Esophagus muscularis mucosa (tissue), 4 donors: ENCODE measurements at regions of chr19 and their contacts with region 1.

Region 1: DNA sequence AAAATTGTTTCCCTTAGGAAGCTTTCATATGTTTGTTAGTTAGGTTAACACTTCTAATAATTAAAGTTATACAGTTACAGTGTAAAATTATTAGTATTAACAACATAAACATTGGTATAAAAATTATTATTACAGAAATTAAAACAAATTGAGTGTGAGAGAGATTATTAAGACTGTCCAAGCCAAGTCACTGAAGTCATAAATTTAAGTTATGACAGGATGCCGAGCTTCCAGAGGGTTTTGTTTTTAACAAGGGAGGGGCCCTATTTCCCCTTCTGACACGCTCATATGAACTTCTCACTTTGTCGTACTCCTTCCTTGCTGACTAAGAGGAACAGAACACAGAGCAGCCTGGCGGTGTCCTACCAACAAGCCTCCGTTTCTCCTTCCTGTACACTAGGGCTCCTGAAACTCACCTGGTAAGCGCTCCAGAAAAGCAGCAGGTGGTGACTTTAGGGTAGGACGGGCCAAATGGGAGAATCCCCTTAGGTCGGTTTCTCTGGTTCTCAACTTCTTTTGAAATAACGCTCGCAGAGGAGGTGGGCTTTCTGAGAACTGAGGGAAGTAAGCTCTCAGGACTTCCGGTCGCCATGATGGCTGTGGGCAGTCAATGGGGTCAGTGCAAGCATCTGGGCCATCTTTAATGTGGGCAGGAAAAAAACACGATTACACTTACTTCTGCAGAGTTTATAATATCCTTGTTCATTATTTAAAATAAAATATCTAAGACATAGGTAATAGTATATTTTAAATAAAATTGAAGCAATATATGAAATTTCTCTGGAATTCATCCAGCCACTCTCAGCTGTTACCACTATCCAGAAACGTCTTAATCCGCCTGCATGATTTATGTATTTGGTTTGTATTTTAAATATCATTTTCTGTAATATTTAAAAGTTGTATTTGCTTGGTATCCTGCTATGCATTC is at the start of gene CARD8:
- DNase-seq: peak; percentile 94
- H3K4me3 ChIP-seq: peak within 1 kb of the TSS; percentile 64 to 77 (median 67)
- H3K27ac ChIP-seq: peak within 1 kb of the TSS; percentile 88 to 92 (median 90)
- H3K4me1 ChIP-seq: peaks cover 20 to 41% (median 24%) of the 10 kb centered on the region in 4 donors
- H3K27me3 ChIP-seq: no peaks in the 10 kb centered on the region
- CTCF ChIP-seq: peak in 1 of 3 experiments; percentile 13
- EP300 ChIP-seq: no peak
- POLR2A ChIP-seq: no peak
- total RNA-seq, gene CARD8: 17.7 to 22.3 (median 20.9) TPM

Region 2: DNA sequence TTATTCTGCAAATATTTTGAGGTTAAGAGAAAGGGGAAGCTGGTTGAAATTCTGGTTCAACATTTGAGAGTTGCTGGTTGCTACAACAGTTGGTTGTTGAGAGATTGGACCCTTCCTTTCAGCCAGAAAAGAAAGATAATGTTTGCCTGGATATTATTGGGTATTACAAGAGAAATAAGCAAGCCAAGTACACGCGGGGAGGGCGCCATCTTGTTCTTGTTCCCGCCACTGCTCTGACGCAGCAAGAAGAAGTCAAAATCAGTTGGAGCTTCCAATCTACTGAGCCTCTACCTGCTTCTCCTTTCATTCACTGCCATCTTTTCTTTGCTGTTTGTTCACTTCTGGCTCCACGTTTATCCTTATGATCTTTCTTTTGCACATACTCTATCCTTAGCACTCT is 282.1 kb before region 1 on chr19:
- intact Hi-C with region 1: loop called (anchors 10 kb)
- DNase-seq: peak; percentile 37
- H3K4me3 ChIP-seq: no peak overlapping the region
- H3K27ac ChIP-seq: no peak overlapping the region
- H3K4me1 ChIP-seq: no peaks in the 10 kb centered on the region
- H3K27me3 ChIP-seq: peaks cover 0 to 45% (median 0%) of the 10 kb centered on the region in 4 donors
- CTCF ChIP-seq: no peak
- EP300 ChIP-seq: no peak
- POLR2A ChIP-seq: no peak

Region 3: GRCh38 chr19:48110350-48110966 is 145.2 kb before region 1 on chr19 and contains the start of gene PLA2G4C:
- intact Hi-C with region 1: loop called (anchors 5 kb)
- DNase-seq: peak; percentile 94
- H3K4me3 ChIP-seq: peak within 1 kb of the TSS; percentile 45 to 61 (median 54)
- H3K27ac ChIP-seq: peak within 1 kb of the TSS; percentile 85 to 94 (median 86)
- H3K4me1 ChIP-seq: peaks cover 20 to 34% (median 33%) of the 10 kb centered on the region in 4 donors
- H3K27me3 ChIP-seq: no peaks in the 10 kb centered on the region
- CTCF ChIP-seq: peak in 1 of 3 experiments; percentile 12
- EP300 ChIP-seq: no peak
- POLR2A ChIP-seq: peak; percentile 41
- total RNA-seq, gene PLA2G4C: 5.3 to 15.1 (median 9.3) TPM

Region 4: GRCh38 chr19:48203732-48204628 is 51.7 kb before region 1 on chr19:
- intact Hi-C with region 1: loop called (anchors 10 kb)
- DNase-seq: peak; percentile 96
- H3K4me3 ChIP-seq: peak overlapping the region; percentile 76 to 83 (median 78)
- H3K27ac ChIP-seq: peak overlapping the region; percentile 76 to 81 (median 80)
- H3K4me1 ChIP-seq: peaks cover 6 to 22% (median 16%) of the 10 kb centered on the region in 4 donors
- H3K27me3 ChIP-seq: peaks cover 0 to 3% (median 0%) of the 10 kb centered on the region in 4 donors
- CTCF ChIP-seq: peak in 1 of 3 experiments; percentile 37
- EP300 ChIP-seq: no peak
- POLR2A ChIP-seq: no peak

Region 5: DNA sequence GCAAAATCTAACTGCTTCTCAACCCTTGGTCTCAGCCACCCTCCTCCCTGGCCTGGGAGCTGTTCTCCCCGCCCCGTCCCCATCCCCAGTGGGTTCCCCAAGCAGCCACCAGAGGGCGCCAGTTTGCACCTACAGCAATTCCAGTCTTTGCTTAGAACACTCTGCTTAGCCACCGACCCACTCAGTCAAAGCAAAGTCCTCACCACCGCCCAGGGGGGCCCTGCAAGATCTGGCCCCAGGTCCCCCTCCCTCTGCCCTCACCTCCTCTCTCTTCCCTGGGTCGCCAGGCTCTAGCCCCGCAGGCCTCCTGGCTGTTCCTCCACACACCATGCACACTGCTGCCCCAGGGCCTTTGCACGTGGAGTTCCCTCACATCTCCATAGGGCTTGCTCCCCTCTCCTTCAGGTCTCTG is 95.7 kb after region 1 on chr19:
- intact Hi-C with region 1: no loop called
- DNase-seq: no peak
- H3K4me3 ChIP-seq: no peak overlapping the region
- H3K27ac ChIP-seq: no peak overlapping the region
- H3K4me1 ChIP-seq: peaks cover 0 to 8% (median 7%) of the 10 kb centered on the region in 4 donors
- H3K27me3 ChIP-seq: no peaks in the 10 kb centered on the region
- CTCF ChIP-seq: peak; percentile 60 to 79 (median 61)
- EP300 ChIP-seq: no peak
- POLR2A ChIP-seq: no peak